ENCODE measurements at regions of chr16 and their contacts with region 1.

Region 1: GRCh38 chr16:3150346-3151218 is 15.8 kb downstream of the ZNF213 start:
- DNase-seq: peak; percentile 95 to 97
- H3K4me3 ChIP-seq: peak overlapping the region; percentile 58 to 63
- H3K27ac ChIP-seq: peak overlapping the region; percentile 81 to 88
- H3K4me1 ChIP-seq: peaks cover 0 to 26% (median 15%) of the 10 kb centered on the region in 4 donors
- H3K27me3 ChIP-seq: no peaks in the 10 kb centered on the region
- CTCF ChIP-seq: no peak

Region 2: DNA sequence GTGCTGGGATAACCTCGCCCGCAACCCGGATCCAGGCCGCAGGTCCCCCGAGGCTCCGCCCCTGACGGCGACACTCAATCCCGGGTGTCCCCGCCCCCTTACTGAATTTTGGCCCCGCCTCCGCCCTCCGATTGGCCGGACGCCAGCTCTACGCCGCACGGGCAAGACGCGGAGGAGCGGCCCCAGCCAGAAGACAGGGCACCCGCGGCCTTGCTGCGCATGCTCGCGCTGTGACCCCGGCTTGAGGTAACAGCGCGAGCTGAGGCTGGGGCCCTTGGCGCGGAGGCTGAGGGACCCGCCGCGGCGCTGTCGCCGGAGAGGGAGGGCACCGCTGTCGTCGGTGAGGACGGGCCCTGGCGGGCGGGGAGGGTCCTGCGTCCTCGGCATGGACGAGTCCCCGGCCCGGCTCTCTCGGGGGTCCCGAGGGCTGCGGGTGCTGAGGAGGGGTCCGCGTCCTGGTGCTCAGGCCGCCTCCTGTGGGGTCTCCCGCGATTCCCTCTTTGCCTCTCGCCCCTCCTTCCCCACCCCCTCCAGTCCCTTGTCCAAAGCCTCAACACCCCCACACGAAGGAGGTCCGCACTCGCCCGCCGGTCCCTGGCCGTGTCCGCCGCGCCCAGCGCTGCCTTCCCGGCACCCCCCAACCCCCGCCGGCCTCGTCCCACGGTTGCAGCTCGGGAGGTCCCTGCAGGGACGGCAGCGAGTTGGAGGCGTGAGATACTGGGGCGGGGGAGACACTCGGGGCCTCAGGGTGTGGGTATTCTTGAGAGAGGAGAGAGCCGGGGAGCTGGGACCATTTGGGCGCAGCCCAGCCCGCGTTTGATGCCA is 267.3 kb before region 1 on chr16 and contains the start of gene FLYWCH2:
- intact Hi-C with region 1: no loop called
- DNase-seq: peak; percentile 97 to 99
- H3K4me3 ChIP-seq: peak within 1 kb of the TSS; percentile 86 to 87
- H3K27ac ChIP-seq: peak within 1 kb of the TSS; percentile 93 to 96
- H3K4me1 ChIP-seq: peaks cover 0 to 17% (median 9%) of the 10 kb centered on the region in 4 donors
- H3K27me3 ChIP-seq: no peaks in the 10 kb centered on the region
- CTCF ChIP-seq: peak in 1 of 2 experiments; percentile 22

Region 3: DNA sequence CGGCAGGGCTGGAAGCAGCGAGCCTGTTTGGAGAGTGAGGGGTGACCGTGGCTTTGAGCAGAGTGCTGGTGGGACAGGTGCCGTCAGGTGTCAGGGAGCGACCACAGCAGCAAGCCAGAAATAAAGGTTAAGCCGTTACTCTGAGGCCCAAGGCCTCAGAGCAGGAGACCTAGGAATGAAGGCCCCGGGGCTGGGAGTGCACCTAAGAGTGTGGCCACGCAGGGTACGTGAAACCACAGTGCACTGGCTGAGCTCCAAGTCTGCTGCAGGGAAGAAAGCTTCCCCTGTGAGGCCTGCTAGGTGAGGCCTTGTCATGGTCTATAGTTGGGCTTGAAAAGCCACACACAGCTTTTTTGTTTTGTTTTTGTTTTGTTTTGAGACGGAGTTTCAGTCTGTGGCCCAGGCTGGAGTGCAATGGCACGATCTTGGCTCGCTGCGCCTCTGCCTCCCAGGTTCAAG is 358.9 kb after region 1 on chr16:
- intact Hi-C with region 1: loop called (anchors 10 kb)
- DNase-seq: peak in 1 of 2 donors; percentile 39
- H3K4me3 ChIP-seq: no peak overlapping the region
- H3K27ac ChIP-seq: no peak overlapping the region
- H3K4me1 ChIP-seq: no peaks in the 10 kb centered on the region
- H3K27me3 ChIP-seq: no peaks in the 10 kb centered on the region
- CTCF ChIP-seq: no peak